Gastrocnemius medialis (tissue), 4 donors: ENCODE measurements at regions of chr12 and their contacts with region 1.

Region 1: DNA sequence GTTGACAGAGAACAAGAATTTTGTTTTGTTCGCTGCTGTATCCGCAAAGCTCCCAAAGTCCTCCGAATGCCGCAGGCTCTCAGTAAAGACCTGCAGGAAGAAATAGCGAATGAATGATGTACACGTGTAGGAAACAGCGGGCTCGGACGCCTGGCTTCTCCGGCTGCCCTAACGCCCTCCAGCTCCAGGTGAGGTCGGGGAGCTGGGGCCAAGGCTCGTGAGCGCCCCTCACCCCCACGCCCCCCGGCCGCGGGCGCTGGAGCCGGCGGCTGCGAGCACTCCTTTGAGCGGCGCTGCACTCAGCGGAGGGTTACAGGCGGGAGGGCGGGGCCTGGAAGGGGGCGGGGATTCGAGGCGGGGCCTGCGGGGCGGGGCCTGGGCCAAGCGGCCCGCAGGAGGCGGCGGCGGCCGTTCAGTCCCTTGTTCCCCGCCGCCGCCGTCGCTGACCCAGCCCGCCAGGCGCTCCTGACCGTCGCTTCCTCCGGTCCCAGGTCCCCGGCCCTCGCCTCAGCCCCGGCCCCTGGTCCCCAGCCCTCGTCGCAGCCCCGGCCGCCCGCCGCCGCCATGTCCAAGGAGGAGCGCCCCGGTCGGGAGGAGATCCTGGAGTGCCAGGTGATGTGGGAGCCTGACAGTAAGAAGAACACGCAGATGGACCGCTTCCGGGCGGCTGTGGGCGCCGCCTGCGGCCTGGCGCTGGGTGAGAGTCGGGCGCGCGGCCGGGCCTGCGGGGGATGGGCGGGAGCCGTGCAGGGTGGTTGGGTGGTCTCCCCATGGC is at the start of gene AACS:
- DNase-seq: peak; percentile 52 to 57
- ATAC-seq: peak; percentile 94 to 95
- H3K4me3 ChIP-seq: peak within 1 kb of the TSS; percentile 67 to 91 (median 82)
- H3K27ac ChIP-seq: peak within 1 kb of the TSS; percentile 60 to 87 (median 74)
- H3K4me1 ChIP-seq: peaks cover 10 to 15% of the 10 kb centered on the region in 2 donors
- H3K27me3 ChIP-seq: no peaks in the 10 kb centered on the region
- CTCF ChIP-seq: no peak
- POLR2A ChIP-seq: peak; percentile 56 to 59
- total RNA-seq, gene AACS: 6.0 to 11.8 (median 8.8) TPM

Region 2: DNA sequence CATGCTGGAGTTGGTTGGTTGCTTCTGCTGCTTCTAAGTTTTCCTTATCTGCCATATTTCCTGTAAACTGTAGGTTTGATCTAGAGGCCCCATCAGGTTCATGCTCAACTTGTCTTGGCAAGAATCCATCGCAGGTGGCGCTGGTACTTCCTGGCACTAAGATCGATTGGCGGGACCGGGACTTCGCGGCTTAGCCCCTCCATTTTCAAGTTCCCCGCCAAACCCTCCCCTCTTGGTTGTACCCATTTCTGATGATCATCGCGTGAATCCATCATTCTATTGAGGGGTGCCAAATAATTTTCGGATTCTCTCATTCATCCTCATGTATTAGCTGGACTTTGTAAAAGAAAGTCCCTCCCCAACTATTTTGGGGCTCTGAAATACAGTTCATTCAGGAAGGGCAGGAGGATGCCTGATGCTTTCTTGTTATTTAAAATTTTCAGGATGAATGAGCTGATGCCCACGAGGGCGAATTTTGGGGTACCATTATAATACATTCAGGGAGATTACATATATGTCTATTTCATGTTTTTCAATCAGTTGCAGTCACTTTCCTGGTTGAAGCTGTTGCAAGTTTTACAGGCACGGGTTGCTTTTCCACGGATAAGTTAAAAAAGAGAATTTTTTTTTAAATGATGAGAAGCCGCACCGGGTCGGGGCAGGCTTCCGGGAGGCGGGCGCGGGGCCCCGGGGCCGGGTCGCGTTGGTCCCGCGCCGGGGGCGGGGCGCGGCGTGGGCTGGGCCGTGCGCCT is 72.2 kb before region 1 on chr12:
- in situ Hi-C with region 1: no loop called
- intact Hi-C with region 1: loop called (anchors 5 kb)
- DNase-seq: no peak
- ATAC-seq: no peak
- H3K4me3 ChIP-seq: peak overlapping the region; percentile 50 to 64 (median 59)
- H3K27ac ChIP-seq: peak overlapping the region in 2 of 4 donors; percentile 47 to 54
- H3K4me1 ChIP-seq: peaks cover 18 to 25% of the 10 kb centered on the region in 2 donors
- H3K27me3 ChIP-seq: no peaks in the 10 kb centered on the region
- CTCF ChIP-seq: no peak
- POLR2A ChIP-seq: no peak

Region 3: GRCh38 chr12:125049093-125049458 is 16.1 kb before region 1 on chr12:
- in situ Hi-C with region 1: no loop called
- intact Hi-C with region 1: loop called (anchors 1 kb)
- DNase-seq: no peak
- ATAC-seq: peak; percentile 45 to 56
- H3K4me3 ChIP-seq: peak overlapping the region; percentile 63 to 72 (median 64)
- H3K27ac ChIP-seq: peak overlapping the region; percentile 64 to 83 (median 74)
- H3K4me1 ChIP-seq: peaks cover 0 to 4% of the 10 kb centered on the region in 2 donors
- H3K27me3 ChIP-seq: no peaks in the 10 kb centered on the region
- CTCF ChIP-seq: no peak
- POLR2A ChIP-seq: no peak

Region 4: DNA sequence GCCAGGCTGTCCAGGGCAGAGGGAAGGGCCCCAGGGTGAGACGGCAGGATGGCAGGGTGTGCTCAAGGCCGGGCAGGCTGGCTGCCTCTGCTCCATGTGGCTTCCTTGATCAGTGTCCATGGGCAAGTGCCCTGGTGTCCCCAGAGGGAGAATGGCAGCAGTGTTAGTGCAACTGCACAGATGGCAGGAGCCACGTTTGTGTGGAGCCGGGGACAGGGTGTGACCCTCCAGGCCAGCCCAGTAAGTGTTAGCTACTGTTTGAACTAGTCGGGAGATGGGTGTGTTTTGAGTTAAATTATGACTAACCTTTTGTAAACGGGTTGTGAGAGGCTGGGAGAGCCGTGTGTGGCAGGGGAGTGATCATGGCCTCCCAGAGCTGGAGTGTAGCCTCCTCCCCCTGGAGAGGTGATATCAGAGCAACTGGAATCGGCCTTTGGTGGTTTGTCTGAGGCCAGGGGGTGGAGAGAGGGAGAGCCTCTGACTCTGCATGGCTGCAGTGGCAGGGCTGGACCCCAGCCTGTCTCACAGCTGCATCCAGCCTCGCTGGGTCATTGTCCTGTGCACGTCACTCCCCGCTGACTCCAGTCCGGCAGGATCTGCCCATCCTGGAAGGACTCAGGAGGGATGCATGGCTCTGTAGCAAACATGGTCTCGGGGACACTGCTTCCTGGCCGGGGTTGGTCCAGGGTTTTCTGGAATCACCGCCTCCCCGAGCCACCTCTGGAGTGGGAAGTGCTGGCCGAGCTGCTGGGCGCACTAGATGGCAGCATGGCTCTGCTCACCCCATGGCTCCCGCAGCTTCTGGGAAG is 27.9 kb after region 1 on chr12:
- in situ Hi-C with region 1: no loop called
- intact Hi-C with region 1: no loop called
- DNase-seq: no peak
- ATAC-seq: no peak
- H3K4me3 ChIP-seq: no peak overlapping the region
- H3K27ac ChIP-seq: no peak overlapping the region
- H3K4me1 ChIP-seq: no peaks in the 10 kb centered on the region
- H3K27me3 ChIP-seq: no peaks in the 10 kb centered on the region
- CTCF ChIP-seq: no peak
- POLR2A ChIP-seq: no peak